PC-3 (cell line): ENCODE measurements at regions of chrX and their contacts with region 1.

Region 1: DNA sequence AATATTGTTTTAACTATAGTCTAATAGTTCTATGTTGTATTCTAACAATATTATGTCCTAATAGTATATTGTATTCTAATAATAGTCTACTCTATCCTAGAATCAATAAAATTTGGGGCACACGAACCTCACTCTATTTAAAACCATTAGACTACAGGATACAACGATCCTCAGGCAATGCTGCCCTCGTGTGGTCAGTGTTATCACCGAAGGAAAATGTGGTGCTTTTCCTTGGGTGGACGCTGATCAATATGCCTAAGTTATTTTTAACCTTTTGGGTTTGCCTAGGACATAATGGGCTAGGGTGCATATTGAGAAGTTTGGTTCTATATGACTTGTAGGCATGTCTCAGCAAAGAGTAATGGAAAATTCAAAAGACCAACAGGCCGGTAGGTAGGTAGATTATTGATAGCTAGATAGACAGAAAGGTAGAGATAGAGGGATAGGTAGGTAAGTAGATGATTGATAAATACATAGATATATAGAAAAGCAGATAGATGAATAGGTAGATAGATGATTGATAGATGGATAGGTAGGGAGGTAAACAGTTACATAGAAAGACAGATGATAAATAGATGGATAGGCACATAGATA is 75.1 kb downstream of the PRKX start:
- DNase-seq: peak; percentile 66
- ATAC-seq: peak; percentile 58; the same call in 1 of the 2 replicates
- H3K4me3 ChIP-seq: no peak overlapping the region
- H3K27ac ChIP-seq: no peak overlapping the region
- H3K4me1 ChIP-seq: no peaks in the 10 kb centered on the region
- H3K27me3 ChIP-seq: no peaks in the 10 kb centered on the region
- CTCF ChIP-seq: peak; percentile 71

Region 2: DNA sequence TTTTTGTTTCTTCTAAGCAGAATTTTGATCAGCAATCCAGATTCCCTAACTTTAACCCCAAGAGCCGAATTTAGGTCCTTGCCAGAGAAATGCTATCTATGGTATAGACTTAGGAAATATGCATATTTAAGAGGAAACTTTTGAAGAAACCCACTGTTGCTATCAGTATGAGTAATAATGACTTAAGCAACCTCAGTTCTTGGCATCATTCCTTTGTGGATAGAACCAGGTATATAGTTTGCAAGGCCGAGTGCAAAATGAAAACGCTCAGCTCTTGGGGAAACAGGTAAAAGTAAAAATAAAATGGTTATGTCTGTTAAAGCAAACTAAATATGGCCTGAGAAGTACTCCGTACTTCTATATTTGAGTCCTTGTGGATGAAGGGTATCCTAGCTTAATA is 519.0 kb before region 1 on chrX:
- CTCF ChIA-PET with region 1: no interaction called
- POLR2A ChIA-PET with region 1: no interaction called
- intact Hi-C with region 1: loop called (anchors 2 kb)
- DNase-seq: peak; percentile 30
- ATAC-seq: no peak
- H3K4me3 ChIP-seq: no peak overlapping the region
- H3K27ac ChIP-seq: no peak overlapping the region
- H3K4me1 ChIP-seq: no peaks in the 10 kb centered on the region
- H3K27me3 ChIP-seq: peaks cover 12% of the 10 kb centered on the region
- CTCF ChIP-seq: no peak